ENCODE measurements at regions of chr11 and their contacts with region 1.

Region 1: GRCh38 chr11:47269002-47269828 is 718 bp upstream of the MADD start:
- DNase-seq: peak; percentile 93
- ATAC-seq: peak; percentile 82

Region 2: DNA sequence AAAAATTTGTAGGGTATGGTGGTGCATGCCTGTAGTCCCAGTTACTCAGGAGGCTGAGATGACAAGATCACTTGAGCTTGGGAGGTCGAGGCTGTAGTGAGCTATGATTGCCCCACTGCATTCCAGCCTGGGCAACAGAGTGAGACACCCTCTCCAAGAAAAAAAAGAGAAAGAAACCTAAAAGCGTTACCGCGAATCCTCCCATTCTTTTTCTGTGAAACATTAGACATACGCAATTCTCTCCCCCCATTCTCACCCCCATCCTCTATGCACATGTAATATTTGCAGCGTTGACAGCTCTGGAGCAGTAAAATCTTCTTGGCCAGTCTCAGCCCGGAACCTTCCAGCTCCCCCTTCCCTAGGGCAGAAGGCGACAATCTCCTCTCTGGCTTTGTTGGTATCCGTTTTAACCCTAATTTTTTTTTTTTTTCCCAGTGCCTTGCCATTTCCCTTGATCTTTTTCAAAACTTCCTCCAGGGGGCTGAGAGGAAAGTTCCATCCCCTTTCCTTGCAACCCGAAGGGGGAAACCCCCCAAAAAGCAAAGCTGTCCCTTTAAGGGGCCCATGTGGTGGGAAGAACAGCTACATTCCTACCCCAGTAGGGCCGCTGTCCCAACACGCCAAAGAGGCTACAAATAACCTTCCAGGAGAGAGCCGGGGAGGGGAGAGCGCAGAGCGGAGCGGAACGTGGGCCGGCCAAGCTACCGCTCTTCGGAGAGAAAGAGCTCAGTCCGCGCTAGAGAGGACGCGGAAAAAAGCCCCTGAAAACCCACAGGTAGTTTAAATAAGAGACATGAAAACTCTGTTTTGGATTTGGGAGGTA is 352.7 kb before region 1 on chr11:
- intact Hi-C with region 1: no loop called
- DNase-seq: peak; percentile 51 to 54
- ATAC-seq: peak; percentile 53

Region 3: GRCh38 chr11:47176328-47177228 is 92.6 kb before region 1 on chr11 and contains the start of gene ARFGAP2:
- intact Hi-C with region 1: loop called in 1 of 2 experiments (anchors 10 kb)
- DNase-seq: peak; percentile 96 to 97
- ATAC-seq: peak; percentile 92
- total RNA-seq, gene ARFGAP2: 81.5 to 85.4 TPM

Region 4: GRCh38 chr11:47415949-47416472 is 146.8 kb after region 1 on chr11:
- intact Hi-C with region 1: no loop called
- DNase-seq: peak; percentile 67 to 68
- ATAC-seq: peak; percentile 59

Measured in left colon (tissue), 2 donors.